ENCODE measurements at regions of chr7 and their contacts with region 1.

Region 1: GRCh38 chr7:83947260-83947659 is 247.3 kb downstream of the SEMA3A start:
- DNase-seq: no peak
- H3K4me3 Mint-ChIP-seq: no peak overlapping the region
- H3K27ac Mint-ChIP-seq: no peak overlapping the region
- H3K4me1 Mint-ChIP-seq: no peaks in the 10 kb centered on the region
- H3K27me3 Mint-ChIP-seq: no peaks in the 10 kb centered on the region

Region 2: GRCh38 chr7:83410989-83411591 is 536.2 kb before region 1 on chr7:
- CTCF ChIA-PET with region 1: no interaction called
- POLR2A ChIA-PET with region 1: no interaction called
- intact Hi-C with region 1: loop called (anchors 5 kb)
- DNase-seq: no peak
- H3K4me3 Mint-ChIP-seq: no peak overlapping the region
- H3K27ac Mint-ChIP-seq: no peak overlapping the region
- H3K4me1 Mint-ChIP-seq: no peaks in the 10 kb centered on the region
- H3K27me3 Mint-ChIP-seq: no peaks in the 10 kb centered on the region

Region 3: DNA sequence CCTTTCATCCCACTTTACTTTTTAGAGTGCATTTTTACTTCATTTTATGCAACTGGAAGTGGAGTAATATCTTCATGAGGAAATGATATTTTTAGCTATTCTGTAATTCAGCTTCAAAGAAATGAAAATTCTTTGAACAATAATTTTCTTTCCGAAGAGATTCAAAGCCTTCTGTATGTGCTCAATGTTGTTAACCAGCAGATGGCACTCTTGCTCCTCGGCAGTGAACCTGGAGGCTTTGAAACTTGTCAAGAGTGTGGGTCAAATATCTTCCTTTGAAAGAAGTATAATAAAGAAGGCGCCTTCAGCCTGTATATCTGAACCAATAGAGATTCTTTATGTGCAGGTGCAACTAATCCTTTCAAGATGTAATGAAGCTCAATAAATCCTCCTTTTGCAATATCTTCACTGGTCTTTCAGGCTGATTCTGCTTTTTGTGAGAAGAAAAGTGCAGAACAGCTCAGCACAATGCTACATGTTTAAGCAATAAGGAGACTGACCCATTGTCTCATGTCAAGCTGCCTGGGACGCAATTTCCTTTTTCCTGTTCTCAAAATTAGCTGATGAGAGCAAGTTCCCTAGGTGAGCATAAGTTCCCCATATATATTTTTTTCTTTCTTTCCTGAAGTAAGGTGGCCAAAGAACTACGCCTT is 11.1 kb before region 1 on chr7:
- CTCF ChIA-PET with region 1: interaction called, 14 read pairs
- POLR2A ChIA-PET with region 1: no interaction called
- intact Hi-C with region 1: no loop called
- DNase-seq: peak; percentile 55
- H3K4me3 Mint-ChIP-seq: no peak overlapping the region
- H3K27ac Mint-ChIP-seq: no peak overlapping the region
- H3K4me1 Mint-ChIP-seq: no peaks in the 10 kb centered on the region
- H3K27me3 Mint-ChIP-seq: no peaks in the 10 kb centered on the region

Measured in activated CD4-positive, alpha-beta memory T cell treated with anti-CD3 and anti-CD28 coated beads for 36 hours (primary cell).